Activated naive CD4-positive, alpha-beta T cell treated with anti-CD3 and anti-CD28 coated beads for 36 hours (primary cell): ENCODE measurements at regions of chr3 and their contacts with region 1.

Region 1: DNA sequence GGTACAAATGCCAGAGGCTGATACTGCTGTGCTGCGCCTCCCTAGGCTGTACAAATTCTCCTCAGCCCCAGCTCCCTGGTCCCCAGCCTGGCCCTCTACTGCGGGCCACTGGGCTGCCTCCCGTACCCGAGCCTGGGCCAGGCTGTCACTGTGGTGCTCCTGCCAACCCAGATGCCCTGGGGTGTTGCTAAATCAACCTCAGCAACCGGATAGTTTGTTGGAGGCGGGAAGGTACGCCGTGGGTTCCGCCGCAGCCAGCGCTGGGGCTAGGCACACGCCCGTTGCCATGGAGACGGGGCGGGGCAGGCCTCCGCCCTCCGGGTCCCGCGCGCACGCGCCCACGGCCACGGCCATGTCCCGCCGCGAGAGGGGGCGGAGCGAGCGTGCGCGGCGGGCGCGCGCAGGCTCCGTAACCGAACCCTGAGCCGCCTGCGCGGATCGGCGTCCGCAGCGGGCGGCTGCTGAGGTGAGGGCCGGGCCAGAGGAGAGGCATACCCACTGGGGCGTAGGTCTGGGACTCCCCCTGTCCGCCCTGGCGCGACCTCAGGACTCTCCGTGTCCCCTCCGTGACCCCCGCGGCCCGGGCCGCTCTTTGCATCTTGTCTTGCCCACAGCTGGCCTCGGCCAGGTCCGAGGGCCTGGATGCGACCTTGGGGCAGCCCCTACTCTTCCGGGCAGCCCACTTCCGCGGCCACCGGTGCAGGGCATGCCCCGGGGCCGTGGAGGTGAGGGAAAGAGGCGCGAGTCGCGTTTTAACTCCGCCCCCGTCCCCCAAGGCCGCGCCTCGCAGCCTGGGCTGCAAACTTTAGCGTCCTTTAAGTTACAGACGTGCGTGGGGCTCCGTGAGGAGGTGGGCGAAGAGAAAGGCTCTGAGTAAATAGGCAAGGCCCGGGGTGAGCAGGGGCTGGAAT is at the start of gene TEX264:
- DNase-seq: peak; percentile 85
- H3K4me3 Mint-ChIP-seq: peak within 1 kb of the TSS; percentile 85
- H3K27ac Mint-ChIP-seq: peak within 1 kb of the TSS; percentile 66
- H3K4me1 Mint-ChIP-seq: peaks cover 61% of the 10 kb centered on the region
- H3K27me3 Mint-ChIP-seq: no peaks in the 10 kb centered on the region
- total RNA-seq, gene TEX264: 23.7 to 26.6 TPM

Region 2: DNA sequence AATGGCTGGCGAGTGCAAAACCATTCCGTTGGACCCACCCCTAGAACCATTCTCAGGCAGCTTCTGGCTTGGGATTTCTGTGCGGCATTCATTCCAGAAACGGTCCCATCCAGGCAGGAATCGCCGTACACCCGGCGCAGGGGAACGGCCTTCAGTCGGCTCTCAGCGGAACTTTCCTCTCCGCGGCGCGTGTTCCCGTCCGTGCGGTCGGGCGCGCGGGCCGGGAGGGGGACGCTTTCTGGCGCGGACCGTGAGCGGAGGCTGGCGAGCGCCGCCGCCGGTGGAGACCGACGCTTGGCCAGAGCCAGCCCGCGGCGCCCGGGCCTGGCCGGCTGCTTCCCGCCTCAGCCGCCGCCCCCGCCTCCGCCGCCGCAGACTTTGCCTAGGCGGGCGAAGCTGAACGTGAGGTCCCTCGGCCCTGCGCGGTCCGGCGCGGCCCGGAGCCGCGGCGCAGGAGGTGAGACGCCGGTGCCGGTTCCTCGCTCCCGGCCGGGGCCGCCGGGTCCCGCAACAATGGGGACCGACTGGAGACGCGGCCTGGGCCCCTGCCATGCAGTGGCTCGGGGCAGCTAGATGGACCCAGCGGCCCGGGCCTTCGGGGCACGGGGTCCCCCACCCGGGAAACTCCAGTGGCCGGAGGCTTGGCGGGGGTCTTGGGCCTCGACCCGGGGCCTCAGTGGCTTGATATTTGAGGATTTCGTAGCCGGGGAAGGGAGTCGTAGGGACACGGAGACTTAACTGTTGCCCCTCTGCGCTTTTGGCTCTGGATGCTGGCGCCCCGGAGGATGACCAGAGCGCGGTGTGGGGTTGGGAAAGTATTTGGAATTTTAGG is 132.4 kb before region 1 on chr3 and contains the start of gene RAD54L2:
- CTCF ChIA-PET with region 1: interaction called, 15 read pairs
- intact Hi-C with region 1: no loop called
- DNase-seq: peak; percentile 83
- H3K4me3 Mint-ChIP-seq: peak within 1 kb of the TSS; percentile 91
- H3K27ac Mint-ChIP-seq: peak within 1 kb of the TSS; percentile 89
- H3K4me1 Mint-ChIP-seq: peaks cover 34% of the 10 kb centered on the region
- H3K27me3 Mint-ChIP-seq: no peaks in the 10 kb centered on the region
- total RNA-seq, gene RAD54L2: 23.1 to 24.5 TPM

Region 3: GRCh38 chr3:51637941-51638471 is 33.1 kb before region 1 on chr3:
- CTCF ChIA-PET with region 1: interaction called, 11 read pairs
- intact Hi-C with region 1: no loop called
- DNase-seq: peak; percentile 50
- H3K4me3 Mint-ChIP-seq: no peak overlapping the region
- H3K27ac Mint-ChIP-seq: no peak overlapping the region
- H3K4me1 Mint-ChIP-seq: no peaks in the 10 kb centered on the region
- H3K27me3 Mint-ChIP-seq: no peaks in the 10 kb centered on the region